Heart left ventricle (tissue), 16 donors: ENCODE measurements at regions of chr3 and their contacts with region 1.

Region 1: DNA sequence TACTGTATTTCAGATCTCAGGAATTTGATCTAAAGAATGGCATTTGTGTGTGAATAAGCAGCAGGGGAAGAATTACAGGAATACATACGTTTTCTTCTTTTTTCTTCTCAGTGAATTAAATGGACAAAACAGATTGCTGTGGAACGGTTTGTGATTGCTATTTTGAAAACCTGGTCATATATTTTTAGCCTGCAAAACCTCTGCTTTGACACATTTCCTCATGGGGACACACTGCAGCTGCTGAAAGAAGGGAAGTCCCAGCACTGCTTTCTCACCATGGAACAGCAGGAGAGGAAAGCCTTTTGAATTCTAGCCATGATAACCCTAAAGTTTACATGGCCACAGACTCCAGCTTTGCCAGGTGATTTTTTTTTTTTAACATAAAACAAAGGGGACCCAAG is 315.0 kb downstream of the OXSM start:
- DNase-seq: no peak
- ATAC-seq: peak in 3 of 4 donors; percentile 33 to 65 (median 42)
- H3K4me3 ChIP-seq: no peak overlapping the region
- H3K27ac ChIP-seq: peak overlapping the region in 11 of 12 donors; percentile 4 to 89 (median 67)
- H3K4me1 ChIP-seq: peaks cover 10 to 63% (median 37%) of the 10 kb centered on the region in 12 donors
- H3K27me3 ChIP-seq: no peaks in the 10 kb centered on the region
- CTCF ChIP-seq: no peak
- POLR2A ChIP-seq: no peak

Region 2: DNA sequence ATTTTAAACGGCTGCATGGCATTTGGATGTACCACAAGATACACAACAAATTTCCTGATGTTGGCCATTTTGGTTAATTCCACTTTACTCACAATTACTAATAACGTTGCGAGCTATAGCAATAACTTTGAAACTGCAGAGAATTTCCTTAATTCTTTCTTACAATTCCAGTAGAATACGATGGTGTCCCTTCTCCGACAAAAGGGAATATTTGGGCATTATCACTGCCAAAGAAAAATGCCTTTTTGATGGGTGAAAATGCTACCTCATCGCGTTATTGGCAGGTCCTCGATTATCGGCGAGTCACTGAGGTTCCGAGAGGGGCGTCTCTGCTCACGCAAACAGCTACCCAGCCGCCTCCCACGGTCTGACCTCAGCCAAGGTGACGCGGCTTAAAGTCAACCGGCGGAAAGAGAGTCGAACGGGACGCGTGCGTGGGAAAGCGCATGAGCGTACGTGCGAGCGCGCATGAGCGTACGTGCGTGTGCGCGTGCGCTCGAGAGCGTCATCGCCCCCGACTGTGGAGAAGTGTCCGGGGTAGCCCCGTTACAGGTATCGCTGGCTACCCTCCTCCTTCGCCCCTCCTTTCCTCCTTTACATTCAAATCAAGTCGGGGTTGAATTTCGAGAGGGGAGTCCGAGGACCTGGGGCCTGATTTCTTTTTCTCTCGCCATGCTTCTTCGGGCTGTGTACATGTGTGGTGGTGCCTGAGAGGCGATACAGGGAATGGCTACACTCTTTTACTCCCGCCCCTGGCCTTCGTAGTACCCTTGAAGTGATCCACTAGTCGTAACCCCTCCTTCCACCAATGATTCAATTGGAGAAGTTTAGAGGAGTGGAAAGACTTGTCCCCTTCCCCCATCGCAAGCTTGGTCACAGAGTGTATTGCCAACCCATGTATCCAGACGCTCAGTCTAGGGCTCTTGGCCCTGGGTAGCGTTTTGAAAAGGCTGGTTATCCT is 315.0 kb before region 1 on chr3 and contains the start of gene OXSM:
- intact Hi-C with region 1: loop called in 4 of 10 experiments (anchors 10 kb)
- DNase-seq: peak; percentile 90 to 97 (median 94)
- ATAC-seq: peak; percentile 99
- H3K4me3 ChIP-seq: peak within 1 kb of the TSS; percentile 46 to 91 (median 72)
- H3K27ac ChIP-seq: peak within 1 kb of the TSS; percentile 49 to 94 (median 89)
- H3K4me1 ChIP-seq: peaks cover 0 to 32% (median 13%) of the 10 kb centered on the region in 12 donors
- H3K27me3 ChIP-seq: no peaks in the 10 kb centered on the region
- CTCF ChIP-seq: no peak
- POLR2A ChIP-seq: peak in 1 of 2 donors; percentile 95
- total RNA-seq, gene OXSM: 7.3 to 18.5 (median 13.7) TPM

Region 3: DNA sequence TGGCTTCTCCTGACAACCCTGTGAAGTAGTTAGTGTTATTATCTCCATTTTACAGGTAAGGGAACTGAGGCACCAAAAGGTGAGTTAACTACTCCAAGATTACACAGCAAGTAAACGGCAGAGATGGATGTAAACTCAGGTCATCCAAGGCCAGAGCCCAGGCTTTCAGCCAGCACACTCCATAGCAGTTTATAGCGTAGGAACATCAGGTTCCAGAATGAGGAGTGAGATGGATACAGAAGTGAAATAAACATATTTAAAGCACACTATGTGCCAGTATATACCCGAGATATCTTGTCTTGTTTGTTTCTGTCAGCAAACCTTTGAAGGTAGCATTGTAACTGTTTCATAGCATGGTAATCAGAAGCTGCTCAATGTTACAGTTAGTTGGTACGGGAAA is 36.0 kb before region 1 on chr3:
- intact Hi-C with region 1: loop called in 2 of 10 experiments (anchors 5 kb)
- DNase-seq: peak in 3 of 5 donors; percentile 25 to 73 (median 67)
- ATAC-seq: peak; percentile 94 to 97 (median 96)
- H3K4me3 ChIP-seq: no peak overlapping the region
- H3K27ac ChIP-seq: peak overlapping the region in 7 of 12 donors; percentile 1 to 62 (median 26)
- H3K4me1 ChIP-seq: peaks cover 0 to 25% (median 0%) of the 10 kb centered on the region in 12 donors
- H3K27me3 ChIP-seq: no peaks in the 10 kb centered on the region
- CTCF ChIP-seq: no peak
- POLR2A ChIP-seq: no peak

Region 4: DNA sequence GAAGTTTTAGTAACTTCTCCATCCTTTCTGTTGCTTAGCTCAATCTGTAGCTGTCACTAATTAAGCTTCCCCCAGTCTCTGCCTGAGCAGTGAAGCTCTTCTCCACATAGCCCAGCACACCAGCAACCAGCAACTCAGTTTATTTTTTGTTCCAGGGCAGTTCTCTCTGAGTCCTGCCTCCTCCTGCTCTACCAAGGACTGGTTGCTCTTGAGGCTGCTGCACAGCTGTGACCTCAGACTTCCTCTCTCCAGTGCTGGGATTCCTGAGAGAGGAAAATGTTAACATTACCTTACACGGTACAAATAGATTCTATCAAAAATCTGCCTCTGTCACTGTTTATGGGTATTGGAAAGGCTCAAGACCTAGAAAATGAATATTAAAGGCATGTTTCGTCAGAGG is 20.2 kb before region 1 on chr3:
- intact Hi-C with region 1: no loop called
- DNase-seq: no peak
- ATAC-seq: peak; percentile 63 to 70 (median 68)
- H3K4me3 ChIP-seq: no peak overlapping the region
- H3K27ac ChIP-seq: no peak overlapping the region
- H3K4me1 ChIP-seq: peaks cover 0 to 7% (median 2%) of the 10 kb centered on the region in 12 donors
- H3K27me3 ChIP-seq: no peaks in the 10 kb centered on the region
- CTCF ChIP-seq: no peak
- POLR2A ChIP-seq: no peak

Region 5: GRCh38 chr3:26236526-26236925 is 131.7 kb after region 1 on chr3:
- intact Hi-C with region 1: loop called in 3 of 10 experiments (anchors 2 to 5 kb)
- DNase-seq: peak in 3 of 5 donors; percentile 26 to 61 (median 36)
- ATAC-seq: peak; percentile 38 to 80 (median 56)
- H3K4me3 ChIP-seq: no peak overlapping the region
- H3K27ac ChIP-seq: peak overlapping the region in 4 of 12 donors; percentile 1 to 50 (median 31)
- H3K4me1 ChIP-seq: peaks cover 0 to 16% (median 0%) of the 10 kb centered on the region in 12 donors
- H3K27me3 ChIP-seq: no peaks in the 10 kb centered on the region
- CTCF ChIP-seq: no peak
- POLR2A ChIP-seq: no peak

Region 6: DNA sequence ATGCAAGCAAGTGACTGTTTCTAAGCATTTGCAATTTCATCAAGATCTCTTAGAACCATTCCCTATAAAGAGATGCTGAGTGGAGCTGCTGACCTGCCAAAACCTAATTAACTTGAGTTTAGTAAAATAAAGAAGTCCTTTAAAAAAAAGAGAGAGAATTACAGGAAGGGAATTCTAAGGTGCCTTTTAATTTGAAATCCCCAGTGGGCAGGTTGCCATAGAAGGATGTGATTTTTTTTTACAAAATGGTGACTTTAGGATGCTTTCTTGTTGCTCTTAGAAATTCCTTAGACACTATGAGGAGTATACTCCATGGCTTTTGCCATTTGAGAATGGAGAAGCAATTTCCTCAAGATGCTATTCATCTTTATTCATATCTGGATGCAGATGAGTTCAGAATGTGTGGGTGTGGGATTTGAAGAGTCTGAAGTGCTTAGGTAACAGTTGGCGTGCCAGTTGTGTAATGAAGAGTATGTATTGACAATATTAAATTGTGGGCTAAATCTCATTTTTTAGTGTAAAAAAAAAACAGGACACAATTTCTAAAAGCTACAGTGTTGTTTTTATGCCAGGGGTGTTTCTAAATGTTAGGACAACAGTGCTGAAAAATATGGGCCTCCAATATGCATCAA is 531.4 kb after region 1 on chr3:
- intact Hi-C with region 1: no loop called
- DNase-seq: no peak
- ATAC-seq: no peak
- H3K4me3 ChIP-seq: no peak overlapping the region
- H3K27ac ChIP-seq: no peak overlapping the region
- H3K4me1 ChIP-seq: peaks cover 0 to 2% (median 0%) of the 10 kb centered on the region in 12 donors
- H3K27me3 ChIP-seq: no peaks in the 10 kb centered on the region
- CTCF ChIP-seq: no peak
- POLR2A ChIP-seq: no peak

Region 7: GRCh38 chr3:26731843-26732242 is 627.0 kb after region 1 on chr3:
- intact Hi-C with region 1: no loop called
- DNase-seq: no peak
- ATAC-seq: no peak
- H3K4me3 ChIP-seq: no peak overlapping the region
- H3K27ac ChIP-seq: no peak overlapping the region
- H3K4me1 ChIP-seq: no peaks in the 10 kb centered on the region
- H3K27me3 ChIP-seq: no peaks in the 10 kb centered on the region
- CTCF ChIP-seq: no peak
- POLR2A ChIP-seq: no peak

Region 8: DNA sequence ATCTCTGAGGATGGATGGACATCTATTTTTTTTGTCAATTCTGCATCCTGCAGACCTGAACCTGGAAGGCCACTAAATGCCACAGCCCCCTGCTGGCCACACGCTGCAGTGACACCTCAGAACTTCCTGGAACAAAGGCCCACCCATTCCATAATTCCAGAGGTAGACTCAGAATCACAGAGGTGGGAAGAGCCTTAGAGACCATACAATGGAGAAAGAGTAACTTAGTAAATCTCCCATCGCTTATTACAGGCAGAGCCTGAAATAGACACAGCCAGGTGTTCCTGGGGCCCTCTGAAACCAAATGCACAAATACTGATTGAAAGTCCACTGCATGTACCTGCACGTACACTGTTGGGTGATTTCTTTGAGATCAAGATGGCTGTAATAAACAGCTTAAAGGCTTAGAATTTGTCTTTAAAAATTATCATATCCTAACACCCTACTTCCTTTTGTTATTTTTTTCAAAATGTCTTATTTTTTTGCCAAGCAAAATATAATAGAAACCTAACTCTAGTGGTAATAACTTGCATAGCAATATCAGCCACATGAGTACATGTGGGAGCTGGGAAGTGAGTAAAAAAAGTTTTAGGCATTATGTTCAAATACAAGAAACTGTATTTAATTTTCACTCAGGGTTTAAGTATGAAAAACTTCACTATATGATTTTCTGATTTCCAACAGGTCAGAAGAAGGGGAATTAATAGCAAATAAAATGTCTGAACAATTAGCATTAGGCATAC is 1554.6 kb after region 1 on chr3:
- intact Hi-C with region 1: no loop called
- DNase-seq: peak; percentile 33 to 71 (median 40)
- ATAC-seq: peak in 3 of 4 donors; percentile 45 to 71 (median 57)
- H3K4me3 ChIP-seq: no peak overlapping the region
- H3K27ac ChIP-seq: no peak overlapping the region
- H3K4me1 ChIP-seq: no peaks in the 10 kb centered on the region
- H3K27me3 ChIP-seq: no peaks in the 10 kb centered on the region
- CTCF ChIP-seq: peak; percentile 71 to 83 (median 77)
- POLR2A ChIP-seq: no peak